Activated CD8-positive, alpha-beta T cell treated with anti-CD3 and anti-CD28 coated beads for 36 hours (primary cell): ENCODE measurements at regions of chr1 and their contacts with region 1.

Region 1: GRCh38 chr1:6343506-6344405 is 49.8 kb downstream of the ACOT7 start:
- DNase-seq: peak; percentile 78
- ATAC-seq: peak; percentile 89
- H3K4me3 Mint-ChIP-seq: no peak overlapping the region
- H3K27ac Mint-ChIP-seq: no peak overlapping the region
- H3K4me1 Mint-ChIP-seq: peaks cover 10% of the 10 kb centered on the region
- H3K27me3 Mint-ChIP-seq: no peaks in the 10 kb centered on the region
- CTCF ChIP-seq: peak; percentile 93

Region 2: GRCh38 chr1:6016191-6016865 is 327.4 kb before region 1 on chr1:
- CTCF ChIA-PET with region 1: no interaction called
- POLR2A ChIA-PET with region 1: no interaction called
- intact Hi-C with region 1: no loop called
- DNase-seq: no peak
- ATAC-seq: no peak
- H3K4me3 Mint-ChIP-seq: no peak overlapping the region
- H3K27ac Mint-ChIP-seq: no peak overlapping the region
- H3K4me1 Mint-ChIP-seq: peaks cover 7% of the 10 kb centered on the region
- H3K27me3 Mint-ChIP-seq: no peaks in the 10 kb centered on the region
- CTCF ChIP-seq: no peak

Region 3: DNA sequence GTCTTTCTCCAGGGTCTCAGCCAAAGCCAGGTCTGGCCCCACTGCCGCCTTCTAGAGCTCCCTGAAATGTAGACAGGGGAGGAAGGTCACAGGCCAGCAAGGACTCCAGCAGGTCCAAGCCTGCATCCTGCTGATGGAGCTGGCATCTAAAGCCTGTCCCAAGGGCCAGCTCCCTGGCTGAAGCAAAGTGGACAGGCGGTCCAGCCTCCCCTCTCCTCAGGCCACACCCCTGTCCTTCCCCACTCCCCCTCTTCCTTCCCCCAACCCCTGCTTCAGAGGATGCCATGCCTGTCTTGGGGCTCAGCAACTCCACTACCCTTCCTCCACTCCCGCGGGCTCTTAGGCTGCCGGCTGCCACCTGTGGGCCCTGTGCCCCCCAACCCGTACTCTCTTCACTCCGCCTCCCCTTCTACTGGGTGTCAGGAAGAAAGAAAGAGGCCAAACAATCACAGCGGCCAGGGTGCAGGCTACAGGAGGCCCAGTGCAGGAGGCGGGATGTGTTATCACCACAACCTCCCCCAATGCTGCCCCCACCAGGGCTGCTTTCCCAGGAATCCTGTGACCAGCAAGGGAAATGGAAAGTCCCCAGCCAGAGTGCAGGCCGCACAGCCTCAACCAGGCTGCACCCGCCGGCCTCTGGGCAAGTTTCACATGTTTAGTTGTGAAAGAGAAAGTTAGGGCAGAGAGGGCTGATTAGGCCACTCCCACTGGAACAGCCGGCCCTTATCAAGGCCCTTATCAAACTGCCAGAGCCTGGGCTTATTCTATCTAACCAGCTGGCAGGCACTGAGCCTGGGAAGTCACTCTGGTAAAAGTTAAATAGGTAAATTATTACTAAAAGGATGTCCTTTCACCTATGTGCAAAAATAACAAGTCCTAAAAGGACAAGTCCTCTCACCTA is 15.7 kb after region 1 on chr1:
- CTCF ChIA-PET with region 1: interaction called, 39 read pairs
- POLR2A ChIA-PET with region 1: interaction called, 6 read pairs
- intact Hi-C with region 1: no loop called
- DNase-seq: peak; percentile 77
- ATAC-seq: peak; percentile 84
- H3K4me3 Mint-ChIP-seq: peak overlapping the region; percentile 46
- H3K27ac Mint-ChIP-seq: peak overlapping the region; percentile 91
- H3K4me1 Mint-ChIP-seq: peaks cover 38% of the 10 kb centered on the region
- H3K27me3 Mint-ChIP-seq: no peaks in the 10 kb centered on the region
- CTCF ChIP-seq: no peak

Region 4: DNA sequence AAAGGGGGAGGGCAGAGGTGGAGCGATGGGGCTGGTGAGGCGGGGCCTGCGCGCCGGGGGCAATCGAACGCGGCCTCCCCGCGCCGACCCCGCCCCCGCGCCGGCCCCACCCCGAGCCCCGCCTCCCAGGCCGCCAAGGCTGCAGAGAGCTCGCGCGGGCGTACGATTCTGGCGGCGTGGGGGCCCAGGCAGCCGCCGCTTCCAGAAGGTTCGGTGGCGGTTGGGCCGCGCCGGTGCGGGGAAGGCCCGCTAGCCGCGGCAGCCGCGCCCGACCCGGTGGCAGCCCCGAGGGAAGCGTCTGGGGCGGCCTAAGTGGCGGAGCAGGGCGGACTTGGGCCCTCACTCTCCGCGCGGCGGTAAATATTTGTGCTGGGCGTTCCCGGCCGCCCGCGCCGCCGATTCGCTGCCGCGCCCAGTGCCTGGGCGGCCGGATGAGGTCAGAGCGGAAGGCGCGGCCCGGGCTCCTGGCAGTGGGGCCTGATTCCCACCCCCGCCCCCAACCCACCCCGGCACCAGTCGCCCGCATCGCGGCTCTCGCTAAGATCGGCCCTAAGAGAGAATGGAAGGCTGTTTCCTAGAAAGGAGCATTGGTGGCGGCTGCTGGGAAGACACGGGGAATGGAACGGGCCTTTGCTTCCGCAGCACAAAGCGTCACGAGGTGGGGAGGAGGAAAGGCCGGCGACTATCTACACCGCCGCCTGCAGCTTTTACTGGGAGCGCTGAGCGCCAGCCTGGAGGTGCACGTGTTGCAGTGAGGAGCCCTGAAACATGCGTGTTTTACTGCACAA is 49.8 kb after region 1 on chr1 and contains the start of gene ACOT7:
- CTCF ChIA-PET with region 1: interaction called, 13 read pairs
- POLR2A ChIA-PET with region 1: no interaction called
- intact Hi-C with region 1: loop called (anchors 5 kb)
- DNase-seq: peak; percentile 94
- ATAC-seq: peak; percentile 91
- H3K4me3 Mint-ChIP-seq: peak within 1 kb of the TSS; percentile 84
- H3K27ac Mint-ChIP-seq: peak within 1 kb of the TSS; percentile 95
- H3K4me1 Mint-ChIP-seq: peaks cover 21% of the 10 kb centered on the region
- H3K27me3 Mint-ChIP-seq: no peaks in the 10 kb centered on the region
- CTCF ChIP-seq: no peak
- total RNA-seq, gene ACOT7: 80.4 to 86.7 TPM

Region 5: DNA sequence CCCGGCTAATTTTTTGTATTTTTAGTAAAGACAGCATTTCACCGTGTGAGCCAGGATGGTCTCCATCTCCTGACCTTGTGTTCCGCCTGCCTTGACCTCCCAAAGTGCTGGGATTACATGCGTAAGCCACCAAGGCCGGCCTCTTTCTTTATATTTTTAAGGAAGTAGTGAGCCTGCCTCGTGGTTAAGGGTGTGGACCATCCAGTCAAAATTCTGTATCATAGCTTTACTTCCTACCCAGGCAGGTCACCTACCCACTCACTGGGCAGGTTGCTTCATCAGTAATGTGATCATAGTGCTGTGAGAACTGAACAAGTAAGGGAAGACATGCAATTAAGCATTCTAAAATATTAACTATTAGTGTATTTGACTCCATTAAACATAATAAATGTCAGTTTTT is 57.9 kb after region 1 on chr1:
- CTCF ChIA-PET with region 1: interaction called, 36 read pairs
- POLR2A ChIA-PET with region 1: interaction called, 3 read pairs
- intact Hi-C with region 1: loop called (anchors 5 kb)
- DNase-seq: no peak
- ATAC-seq: no peak
- H3K4me3 Mint-ChIP-seq: no peak overlapping the region
- H3K27ac Mint-ChIP-seq: no peak overlapping the region
- H3K4me1 Mint-ChIP-seq: no peaks in the 10 kb centered on the region
- H3K27me3 Mint-ChIP-seq: no peaks in the 10 kb centered on the region
- CTCF ChIP-seq: no peak

Region 6: DNA sequence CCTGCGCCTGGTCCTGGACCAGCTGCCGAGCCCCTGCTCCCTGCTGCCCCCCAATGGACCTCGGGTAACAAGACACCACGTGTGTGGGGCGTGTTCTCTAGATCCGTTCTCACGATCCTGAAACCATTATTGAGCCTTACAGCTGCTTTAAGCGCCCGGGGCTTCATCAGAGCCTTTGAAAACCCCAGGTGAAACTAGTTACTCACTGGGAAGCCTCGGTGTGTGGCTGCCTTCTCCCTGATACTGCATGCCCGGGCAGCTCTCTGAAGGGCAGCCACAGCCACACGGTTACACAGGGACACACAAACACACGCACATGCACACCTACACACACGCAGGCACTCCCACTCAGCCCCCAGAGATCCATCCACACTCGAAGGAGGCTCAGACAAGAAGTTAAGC is 70.7 kb after region 1 on chr1:
- CTCF ChIA-PET with region 1: interaction called, 17 read pairs
- POLR2A ChIA-PET with region 1: no interaction called
- intact Hi-C with region 1: no loop called
- DNase-seq: peak; percentile 79
- ATAC-seq: peak; percentile 94
- H3K4me3 Mint-ChIP-seq: no peak overlapping the region
- H3K27ac Mint-ChIP-seq: no peak overlapping the region
- H3K4me1 Mint-ChIP-seq: peaks cover 11% of the 10 kb centered on the region
- H3K27me3 Mint-ChIP-seq: peaks cover 54% of the 10 kb centered on the region
- CTCF ChIP-seq: peak; percentile 62